Mammary epithelial cell (primary cell): ENCODE measurements at regions of chr18 and their contacts with region 1.

Region 1: DNA sequence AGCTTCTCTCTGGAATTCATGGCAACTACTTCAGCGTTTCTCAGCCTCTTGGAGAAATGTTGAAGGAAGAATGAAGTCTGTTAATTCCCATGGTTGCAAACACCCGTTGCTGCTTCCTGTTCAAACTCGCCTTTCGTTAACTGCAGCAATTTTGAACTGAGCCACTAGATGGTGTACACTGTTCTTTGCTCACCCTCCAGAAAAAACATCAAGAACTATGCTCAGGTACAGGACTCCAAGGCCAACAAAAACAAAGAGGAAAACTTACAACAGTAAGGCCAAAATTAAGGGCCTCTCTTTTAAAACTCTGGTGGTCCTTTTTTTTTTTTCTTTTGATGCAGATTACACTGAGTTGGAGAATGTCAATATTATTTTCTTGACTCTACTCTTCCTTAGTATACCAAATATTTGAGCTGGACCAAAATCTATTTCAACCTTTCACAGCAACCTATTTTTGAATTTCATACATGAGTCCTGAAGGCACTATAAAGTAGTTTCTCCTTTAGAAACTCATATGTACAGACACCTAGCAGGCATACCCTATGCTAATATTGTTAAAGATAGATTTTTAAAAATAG is 58.2 kb downstream of the KLHL14 start:
- DNase-seq: peak; percentile 64
- H3K4me3 ChIP-seq: no peak overlapping the region
- H3K27ac ChIP-seq: no peak overlapping the region
- H3K4me1 ChIP-seq: no peaks in the 10 kb centered on the region
- H3K27me3 ChIP-seq: no peaks in the 10 kb centered on the region
- CTCF ChIP-seq: peak; percentile 87 to 91

Region 2: DNA sequence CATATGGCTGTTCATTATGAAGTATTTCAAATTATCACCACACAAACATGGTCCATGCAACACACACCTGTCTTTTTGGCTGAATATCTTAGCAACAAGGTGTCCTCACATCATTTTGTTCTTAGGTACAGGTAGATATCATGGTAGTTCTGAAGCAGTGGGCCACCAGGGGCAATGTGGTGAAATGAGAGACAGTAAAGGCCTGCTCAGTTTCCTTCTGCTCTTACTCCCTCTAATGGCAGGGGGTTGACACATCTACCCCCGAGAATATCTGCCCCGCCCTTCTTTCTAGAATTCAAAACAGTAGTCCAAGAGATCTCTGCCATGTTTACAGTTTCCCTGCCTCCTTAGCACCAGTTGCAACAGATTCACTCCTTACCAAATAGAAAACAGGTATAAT is 205.1 kb after region 1 on chr18:
- CTCF ChIA-PET with region 1: no interaction called
- dilution Hi-C with region 1: no loop called
- in situ Hi-C with region 1: no loop called
- intact Hi-C with region 1: loop called (anchors 1 kb)
- DNase-seq: peak; percentile 36
- H3K4me3 ChIP-seq: no peak overlapping the region
- H3K27ac ChIP-seq: no peak overlapping the region
- H3K4me1 ChIP-seq: peaks cover 19% of the 10 kb centered on the region
- H3K27me3 ChIP-seq: no peaks in the 10 kb centered on the region
- CTCF ChIP-seq: peak; percentile 40 to 52

Region 3: GRCh38 chr18:33201509-33201926 is 486.9 kb after region 1 on chr18:
- CTCF ChIA-PET with region 1: no interaction called
- dilution Hi-C with region 1: no loop called
- in situ Hi-C with region 1: no loop called
- intact Hi-C with region 1: loop called (anchors 5 kb)
- DNase-seq: peak; percentile 11
- H3K4me3 ChIP-seq: no peak overlapping the region
- H3K27ac ChIP-seq: no peak overlapping the region
- H3K4me1 ChIP-seq: no peaks in the 10 kb centered on the region
- H3K27me3 ChIP-seq: peaks cover 2% of the 10 kb centered on the region
- CTCF ChIP-seq: peak; percentile 50 to 63